ENCODE measurements at regions of chr17 and their contacts with region 1.

Region 1: GRCh38 chr17:43584666-43585102 is 38.5 kb upstream of the ETV4 start:
- DNase-seq: peak; percentile 81 to 88
- H3K4me3 ChIP-seq: no peak overlapping the region
- H3K4me3 Mint-ChIP-seq: peak overlapping the region; percentile 14
- H3K27ac Mint-ChIP-seq: peak overlapping the region; percentile 92
- H3K4me1 ChIP-seq: peaks cover 73% of the 10 kb centered on the region
- H3K4me1 Mint-ChIP-seq: peaks cover 57% of the 10 kb centered on the region
- H3K27me3 ChIP-seq: no peaks in the 10 kb centered on the region
- H3K27me3 Mint-ChIP-seq: no peaks in the 10 kb centered on the region
- CTCF ChIP-seq: no peak

Region 2: DNA sequence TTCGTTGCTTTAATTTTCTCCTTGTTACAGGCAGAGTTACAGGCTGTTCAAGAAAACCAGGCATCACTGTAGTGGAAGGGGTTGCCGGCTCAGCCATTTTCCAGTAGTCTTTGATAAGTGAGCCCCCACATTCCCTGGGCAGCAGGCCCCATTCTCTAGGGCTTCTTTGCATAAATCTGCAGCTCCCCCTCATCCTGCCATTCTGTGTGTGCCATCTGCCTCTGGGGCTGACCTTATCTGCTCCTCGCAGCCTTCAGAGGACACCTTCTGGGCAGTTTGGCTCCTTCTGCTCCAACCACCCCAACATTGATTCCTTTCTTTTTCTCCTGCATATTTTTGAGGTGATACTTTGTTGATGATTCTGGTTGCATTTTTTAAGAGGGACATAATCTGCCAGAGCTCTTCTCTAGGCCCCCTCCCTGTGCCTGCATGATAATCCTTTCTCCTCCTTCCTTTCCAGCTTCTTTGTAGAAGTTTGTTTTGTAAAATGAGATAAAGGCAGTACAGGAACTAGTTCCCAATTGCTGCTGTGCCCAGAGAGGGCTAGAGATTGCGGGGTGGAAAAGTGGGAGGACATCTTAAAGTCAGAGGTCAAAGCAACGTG is 542.6 kb before region 1 on chr17:
- CTCF ChIA-PET with region 1: no interaction called
- POLR2A ChIA-PET with region 1: no interaction called
- intact Hi-C with region 1: no loop called
- DNase-seq: no peak
- H3K4me3 ChIP-seq: no peak overlapping the region
- H3K4me3 Mint-ChIP-seq: no peak overlapping the region
- H3K27ac Mint-ChIP-seq: peak overlapping the region; percentile 62
- H3K4me1 ChIP-seq: no peaks in the 10 kb centered on the region
- H3K4me1 Mint-ChIP-seq: no peaks in the 10 kb centered on the region
- H3K27me3 ChIP-seq: no peaks in the 10 kb centered on the region
- H3K27me3 Mint-ChIP-seq: no peaks in the 10 kb centered on the region
- CTCF ChIP-seq: no peak

Region 3: DNA sequence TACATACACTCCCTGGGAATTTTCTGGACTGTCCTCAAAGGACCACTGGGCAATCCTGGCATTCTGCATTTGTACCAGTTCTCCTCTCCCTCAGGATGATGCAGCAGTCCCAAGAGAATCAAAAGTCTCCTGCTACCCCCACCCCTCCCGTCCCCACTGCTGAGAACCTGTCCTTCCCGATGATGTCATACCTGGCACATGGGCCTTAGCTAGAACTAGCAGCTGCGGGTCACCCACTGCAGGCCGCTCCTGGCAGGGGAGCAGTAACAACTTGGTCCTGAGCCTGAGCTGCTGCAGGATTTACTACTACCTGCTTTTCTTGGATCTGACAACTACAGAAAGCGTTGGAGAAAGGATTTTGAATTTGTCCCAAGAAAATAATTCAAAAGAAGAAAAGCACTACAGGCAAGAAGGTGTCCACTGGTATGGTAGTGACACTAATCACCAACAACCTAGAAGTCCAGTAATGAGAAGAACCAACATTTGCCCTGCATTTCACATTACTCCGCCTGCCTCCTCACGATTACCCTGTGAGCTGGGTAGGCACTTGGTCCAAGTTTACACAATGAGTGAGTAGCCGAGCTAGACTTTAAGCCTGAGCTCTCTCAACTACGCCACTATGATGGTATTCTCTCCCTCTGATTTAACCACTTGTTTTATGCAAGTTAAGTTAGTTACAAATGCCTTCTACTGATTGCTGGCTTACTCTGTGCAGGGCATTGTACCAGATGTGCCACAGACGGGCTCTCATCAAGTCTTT is 16.8 kb after region 1 on chr17:
- CTCF ChIA-PET with region 1: no interaction called
- POLR2A ChIA-PET with region 1: interaction called, 14 read pairs
- intact Hi-C with region 1: no loop called
- DNase-seq: no peak
- H3K4me3 ChIP-seq: no peak overlapping the region
- H3K4me3 Mint-ChIP-seq: no peak overlapping the region
- H3K27ac Mint-ChIP-seq: peak overlapping the region; percentile 22
- H3K4me1 ChIP-seq: peaks cover 34% of the 10 kb centered on the region
- H3K4me1 Mint-ChIP-seq: peaks cover 44% of the 10 kb centered on the region
- H3K27me3 ChIP-seq: no peaks in the 10 kb centered on the region
- H3K27me3 Mint-ChIP-seq: no peaks in the 10 kb centered on the region
- CTCF ChIP-seq: no peak

Region 4: DNA sequence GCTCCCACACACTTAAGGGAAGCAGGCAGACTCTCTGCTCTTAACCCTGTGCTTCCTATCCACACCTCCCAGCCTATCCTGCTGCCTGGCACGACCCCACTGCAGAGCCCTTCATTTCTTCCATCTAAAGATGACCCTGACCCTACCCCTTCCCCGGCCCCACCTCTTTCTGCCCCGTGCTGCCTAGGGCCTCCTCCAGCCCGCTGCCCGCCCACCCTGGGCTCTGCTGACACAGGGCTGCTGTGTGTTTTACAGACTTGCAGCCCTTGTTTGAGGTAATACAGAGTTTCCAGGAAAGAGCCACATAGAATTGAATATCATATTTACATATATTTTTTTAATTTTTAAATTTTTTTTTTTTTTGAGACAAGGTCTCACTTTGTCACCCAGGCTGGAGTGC is 35.0 kb after region 1 on chr17:
- CTCF ChIA-PET with region 1: interaction called, 3 read pairs
- POLR2A ChIA-PET with region 1: no interaction called
- intact Hi-C with region 1: loop called (anchors 2 kb)
- DNase-seq: no peak
- H3K4me3 ChIP-seq: no peak overlapping the region
- H3K4me3 Mint-ChIP-seq: no peak overlapping the region
- H3K27ac Mint-ChIP-seq: peak overlapping the region; percentile 2
- H3K4me1 ChIP-seq: peaks cover 21% of the 10 kb centered on the region
- H3K4me1 Mint-ChIP-seq: peaks cover 28% of the 10 kb centered on the region
- H3K27me3 ChIP-seq: no peaks in the 10 kb centered on the region
- H3K27me3 Mint-ChIP-seq: no peaks in the 10 kb centered on the region
- CTCF ChIP-seq: no peak

Region 5: GRCh38 chr17:43673516-43674323 is 89.0 kb after region 1 on chr17:
- CTCF ChIA-PET with region 1: interaction called, 208 read pairs
- POLR2A ChIA-PET with region 1: interaction called, 46 read pairs
- intact Hi-C with region 1: loop called (anchors 1 kb)
- DNase-seq: peak; percentile 78 to 86
- H3K4me3 ChIP-seq: no peak overlapping the region
- H3K4me3 Mint-ChIP-seq: no peak overlapping the region
- H3K27ac Mint-ChIP-seq: peak overlapping the region; percentile 90
- H3K4me1 ChIP-seq: peaks cover 75% of the 10 kb centered on the region
- H3K4me1 Mint-ChIP-seq: peaks cover 71% of the 10 kb centered on the region
- H3K27me3 ChIP-seq: no peaks in the 10 kb centered on the region
- H3K27me3 Mint-ChIP-seq: no peaks in the 10 kb centered on the region
- CTCF ChIP-seq: peak; percentile 94 to 97

Region 6: DNA sequence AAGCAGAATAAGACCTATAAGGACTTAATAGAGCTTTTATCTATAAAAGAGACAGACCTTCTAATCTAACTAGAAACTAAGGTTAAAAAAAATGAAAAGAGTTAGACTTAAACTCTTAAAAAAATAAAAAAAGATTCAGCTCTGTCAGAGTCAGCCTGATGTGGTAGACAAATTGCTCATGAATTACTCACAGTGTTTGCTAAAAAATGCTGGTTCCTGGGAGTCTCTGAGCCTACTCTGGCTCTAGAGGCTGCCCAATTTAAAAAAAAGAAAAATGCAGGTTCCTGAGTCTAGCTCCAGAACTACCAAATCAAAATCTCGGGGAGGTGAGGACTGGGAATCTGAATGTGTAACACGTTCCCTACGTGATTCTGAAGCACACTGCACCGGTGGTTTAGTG is 155.9 kb after region 1 on chr17:
- CTCF ChIA-PET with region 1: no interaction called
- POLR2A ChIA-PET with region 1: no interaction called
- intact Hi-C with region 1: no loop called
- DNase-seq: no peak
- H3K4me3 ChIP-seq: no peak overlapping the region
- H3K4me3 Mint-ChIP-seq: no peak overlapping the region
- H3K27ac Mint-ChIP-seq: no peak overlapping the region
- H3K4me1 ChIP-seq: no peaks in the 10 kb centered on the region
- H3K4me1 Mint-ChIP-seq: peaks cover 7% of the 10 kb centered on the region
- H3K27me3 ChIP-seq: no peaks in the 10 kb centered on the region
- H3K27me3 Mint-ChIP-seq: peaks cover 7% of the 10 kb centered on the region
- CTCF ChIP-seq: no peak